CD8-positive, alpha-beta T cell (primary cell): ENCODE measurements at regions of chr2 and their contacts with region 1.

Region 1: DNA sequence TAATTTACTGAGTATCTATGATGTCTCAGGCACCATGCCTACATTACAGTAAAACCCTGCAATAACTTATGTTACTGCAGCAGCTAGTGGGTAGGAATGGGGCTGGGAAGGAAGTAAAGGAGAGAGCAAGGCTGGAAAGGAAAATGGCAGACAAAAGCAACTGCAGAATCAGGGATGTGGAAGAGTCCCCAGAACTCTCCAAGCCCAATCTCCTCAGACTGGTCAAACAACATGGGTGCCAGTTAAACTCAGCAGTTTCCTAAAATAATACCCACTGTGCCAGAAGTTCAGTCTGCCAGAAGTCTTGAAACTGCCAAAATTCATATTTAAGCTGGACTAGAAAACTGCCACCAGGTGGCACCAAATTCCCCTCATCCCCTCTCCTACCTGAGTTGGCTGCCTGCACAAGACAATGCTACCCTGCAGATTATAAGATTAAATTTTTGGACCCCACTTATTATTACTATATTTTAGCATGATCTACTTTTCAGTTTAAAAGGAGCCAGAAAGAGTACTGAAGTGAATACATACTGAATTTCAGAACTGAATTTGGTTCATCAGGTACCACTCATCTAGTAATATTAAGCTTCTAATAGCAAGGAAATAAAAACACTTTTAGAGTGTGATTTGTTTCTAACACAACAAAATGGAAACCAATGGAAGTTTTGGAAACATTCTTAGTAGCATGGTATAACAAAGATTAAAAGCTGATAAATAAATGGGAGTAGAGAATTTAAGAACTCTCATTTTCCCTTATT is 86.8 kb upstream of the DNER start:
- DNase-seq: peak; percentile 48 to 82 (median 75)
- ATAC-seq: peak; percentile 77
- H3K4me3 ChIP-seq: no peak overlapping the region
- H3K4me3 Mint-ChIP-seq: no peak overlapping the region
- H3K27ac ChIP-seq: no peak overlapping the region
- H3K27ac Mint-ChIP-seq: no peak overlapping the region
- H3K4me1 ChIP-seq: no peaks in the 10 kb centered on the region
- H3K4me1 Mint-ChIP-seq: no peaks in the 10 kb centered on the region
- H3K27me3 ChIP-seq: no peaks in the 10 kb centered on the region
- H3K27me3 Mint-ChIP-seq: no peaks in the 10 kb centered on the region
- CTCF ChIP-seq: peak; percentile 87

Region 2: DNA sequence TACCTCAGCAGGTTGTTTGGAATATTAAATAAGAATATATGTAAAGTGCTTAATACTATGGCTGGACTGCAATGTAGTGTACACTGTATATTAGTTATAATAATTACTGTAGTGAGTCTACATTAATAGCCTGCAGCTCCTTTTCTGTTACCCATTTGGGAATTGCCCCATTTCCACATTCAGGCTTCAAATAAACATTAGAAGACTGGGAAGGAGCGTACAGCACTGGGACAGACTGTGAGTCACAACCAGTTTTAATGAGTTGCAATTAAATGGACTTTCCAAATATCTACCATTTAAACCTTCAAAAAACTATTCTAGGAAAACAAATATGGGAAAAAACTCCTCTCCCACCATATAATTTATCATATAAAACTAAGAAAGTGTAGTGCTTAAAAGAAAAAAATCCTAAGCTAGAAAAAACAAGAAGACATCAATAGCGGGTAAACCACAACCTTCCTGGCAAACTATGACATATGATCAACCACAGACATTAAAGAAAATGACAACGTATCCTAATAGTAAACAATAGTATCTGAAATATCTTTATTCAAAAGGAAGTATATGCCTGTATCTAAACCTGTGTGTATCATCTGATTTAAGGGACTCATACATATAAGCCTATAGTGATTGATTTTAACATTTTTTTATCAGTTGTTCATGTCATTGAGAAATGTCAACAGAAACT is 34.6 kb after region 1 on chr2:
- CTCF ChIA-PET with region 1: interaction called, 25 read pairs
- POLR2A ChIA-PET with region 1: no interaction called
- intact Hi-C with region 1: loop called in 1 of 2 experiments (anchors 5 kb)
- DNase-seq: peak in 3 of 9 experiments; percentile 25 to 71 (median 53)
- ATAC-seq: peak; percentile 73
- H3K4me3 ChIP-seq: no peak overlapping the region
- H3K4me3 Mint-ChIP-seq: peak overlapping the region; percentile 16
- H3K27ac ChIP-seq: peak overlapping the region in 1 of 2 experiments; percentile 26
- H3K27ac Mint-ChIP-seq: peak overlapping the region; percentile 25
- H3K4me1 ChIP-seq: peaks cover 47% of the 10 kb centered on the region
- H3K4me1 Mint-ChIP-seq: peaks cover 71% of the 10 kb centered on the region
- H3K27me3 ChIP-seq: no peaks in the 10 kb centered on the region
- H3K27me3 Mint-ChIP-seq: no peaks in the 10 kb centered on the region
- CTCF ChIP-seq: no peak

Region 3: GRCh38 chr2:229910832-229911412 is 109.7 kb after region 1 on chr2:
- CTCF ChIA-PET with region 1: interaction called, 52 read pairs
- POLR2A ChIA-PET with region 1: interaction called, 3 read pairs
- intact Hi-C with region 1: loop called (anchors 1 kb)
- DNase-seq: peak in 3 of 9 experiments; percentile 14 to 62 (median 50)
- ATAC-seq: peak; percentile 75
- H3K4me3 ChIP-seq: no peak overlapping the region
- H3K4me3 Mint-ChIP-seq: no peak overlapping the region
- H3K27ac ChIP-seq: no peak overlapping the region
- H3K27ac Mint-ChIP-seq: peak overlapping the region; percentile 81
- H3K4me1 ChIP-seq: peaks cover 14% of the 10 kb centered on the region
- H3K4me1 Mint-ChIP-seq: peaks cover 62% of the 10 kb centered on the region
- H3K27me3 ChIP-seq: no peaks in the 10 kb centered on the region
- H3K27me3 Mint-ChIP-seq: no peaks in the 10 kb centered on the region
- CTCF ChIP-seq: peak; percentile 44

Region 4: DNA sequence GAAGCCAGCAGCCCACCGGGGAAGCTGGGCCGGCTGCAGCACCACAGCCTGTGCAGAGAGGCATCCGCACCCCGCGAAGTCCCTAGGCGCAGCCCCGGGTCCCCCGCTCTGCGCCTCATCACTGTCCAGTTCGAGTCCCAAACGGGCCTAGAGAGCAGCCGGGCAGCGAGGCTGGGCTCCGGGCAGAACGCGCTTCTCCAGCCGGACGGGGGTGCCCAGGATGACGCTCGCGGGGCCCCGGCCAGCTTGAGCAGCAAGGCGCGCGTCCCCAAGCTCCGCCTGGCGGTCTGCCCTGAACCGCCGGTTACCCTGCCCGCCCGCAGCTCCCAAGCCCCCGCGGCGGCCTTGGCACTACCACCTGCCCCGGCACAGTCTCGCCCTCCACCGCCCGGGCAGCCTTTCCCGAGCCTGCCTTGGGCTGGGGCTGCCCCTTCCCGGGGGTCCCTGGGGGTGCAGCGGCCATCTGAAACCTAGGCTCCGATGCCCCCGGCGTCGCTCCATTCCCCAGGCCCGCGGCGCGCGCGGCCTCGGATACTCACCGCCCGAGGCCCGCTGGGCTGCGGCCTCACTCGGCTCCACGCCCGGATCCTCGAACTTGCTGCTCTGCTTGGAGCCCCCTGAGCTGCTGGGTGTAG is 267.0 kb after region 1 on chr2:
- CTCF ChIA-PET with region 1: interaction called, 4 read pairs
- POLR2A ChIA-PET with region 1: no interaction called
- intact Hi-C with region 1: loop called in 1 of 2 experiments (anchors 10 kb)
- DNase-seq: peak; percentile 7 to 69 (median 39)
- ATAC-seq: peak; percentile 24
- H3K4me3 ChIP-seq: peak overlapping the region; percentile 50 to 63
- H3K4me3 Mint-ChIP-seq: peak overlapping the region; percentile 80
- H3K27ac ChIP-seq: no peak overlapping the region
- H3K27ac Mint-ChIP-seq: no peak overlapping the region
- H3K4me1 ChIP-seq: no peaks in the 10 kb centered on the region
- H3K4me1 Mint-ChIP-seq: peaks cover 15% of the 10 kb centered on the region
- H3K27me3 ChIP-seq: no peaks in the 10 kb centered on the region
- H3K27me3 Mint-ChIP-seq: peaks cover 27% of the 10 kb centered on the region
- CTCF ChIP-seq: peak; percentile 8